Posterior vena cava (tissue), 2 donors: ENCODE measurements at regions of chr13 and their contacts with region 1.

Region 1: GRCh38 chr13:82791035-82791434 is 1091.2 kb downstream of the SLITRK1 start:
- DNase-seq: no peak

Region 2: GRCh38 chr13:82739881-82740280 is 51.2 kb before region 1 on chr13:
- intact Hi-C with region 1: no loop called
- DNase-seq: no peak

Region 3: GRCh38 chr13:82905071-82905470 is 114.0 kb after region 1 on chr13:
- intact Hi-C with region 1: no loop called
- DNase-seq: no peak

Region 4: DNA sequence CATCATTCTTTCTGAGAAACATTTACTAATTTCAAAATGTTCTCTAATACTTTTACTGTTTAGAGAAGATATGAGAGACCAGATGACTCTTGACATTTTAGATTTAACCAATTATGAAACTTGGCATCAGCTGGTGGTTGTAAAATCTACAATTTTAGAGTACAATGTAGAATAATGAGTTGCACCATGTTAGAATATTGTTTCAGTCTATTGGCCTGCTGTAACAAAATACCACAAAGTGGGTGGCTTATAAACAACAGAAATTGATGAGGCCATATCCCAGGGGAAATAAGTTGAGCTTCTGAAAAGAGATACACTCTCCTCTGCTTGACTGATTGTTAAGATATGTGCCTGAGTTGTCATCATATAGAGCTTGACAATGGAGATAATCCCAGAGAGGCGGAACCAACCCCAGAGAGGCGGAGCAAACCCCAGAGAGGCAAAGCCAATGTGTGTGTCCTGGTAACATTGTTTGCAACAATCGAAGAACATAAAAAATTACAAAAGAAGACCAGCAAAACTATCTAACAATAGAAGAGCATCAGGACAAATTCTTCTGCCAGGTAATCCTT is 1464.3 kb after region 1 on chr13:
- intact Hi-C with region 1: loop called in 1 of 2 experiments (anchors 5 kb)
- DNase-seq: no peak